Naive thymus-derived CD4-positive, alpha-beta T cell (primary cell): ENCODE measurements at regions of chr7 and their contacts with region 1.

Region 1: DNA sequence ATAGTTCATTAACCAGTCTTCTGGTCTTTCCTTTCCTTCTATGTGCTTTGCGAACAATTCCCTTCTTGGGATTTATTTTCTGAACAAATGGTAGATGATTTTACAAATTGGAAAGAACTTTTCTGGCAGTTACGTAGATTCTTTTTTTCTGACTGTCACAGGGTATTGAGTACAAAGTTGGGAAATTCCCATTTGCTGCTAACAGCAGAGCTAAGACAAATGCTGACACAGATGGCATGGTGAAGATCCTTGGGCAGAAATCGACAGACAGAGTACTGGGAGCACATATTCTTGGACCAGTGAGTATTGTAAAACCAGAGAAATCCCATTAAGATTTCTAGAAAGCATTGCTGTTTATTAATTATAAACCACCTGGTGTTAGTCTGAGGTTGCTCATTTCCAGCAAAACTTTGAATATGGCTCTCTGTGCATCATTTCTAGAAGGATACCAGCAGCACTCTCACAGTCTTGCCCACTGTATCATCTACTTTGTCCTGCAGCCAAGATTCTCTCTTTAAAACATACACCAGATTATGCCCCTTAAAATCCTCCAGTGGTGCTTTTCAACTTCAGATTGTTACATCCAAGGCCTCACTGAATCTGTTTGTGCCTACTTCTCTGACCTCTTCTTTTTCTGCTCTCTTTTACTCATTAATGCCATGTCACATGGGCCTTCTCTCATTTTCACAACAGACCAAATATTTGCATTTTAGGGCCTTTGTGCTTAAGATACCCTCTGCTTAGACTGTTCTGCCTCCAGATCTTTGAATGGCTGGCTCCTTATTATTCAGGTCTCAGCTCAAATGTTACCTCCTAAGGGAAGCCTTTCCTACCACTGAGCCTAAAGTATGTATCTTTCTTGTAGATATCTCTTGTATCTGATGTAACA is 27.0 kb downstream of the DLD start:
- DNase-seq: no peak
- ATAC-seq: no peak
- H3K4me3 ChIP-seq: no peak overlapping the region
- H3K4me3 Mint-ChIP-seq: no peak overlapping the region
- H3K27ac ChIP-seq: no peak overlapping the region
- H3K27ac Mint-ChIP-seq: peak overlapping the region in 1 of 9 donors; percentile 12
- H3K4me1 ChIP-seq: peaks cover 0 to 2% of the 10 kb centered on the region in 2 donors
- H3K4me1 Mint-ChIP-seq: peaks cover 12 to 46% (median 35%) of the 10 kb centered on the region in 7 donors
- H3K27me3 ChIP-seq: no peaks in the 10 kb centered on the region
- H3K27me3 Mint-ChIP-seq: no peaks in the 10 kb centered on the region

Region 2: DNA sequence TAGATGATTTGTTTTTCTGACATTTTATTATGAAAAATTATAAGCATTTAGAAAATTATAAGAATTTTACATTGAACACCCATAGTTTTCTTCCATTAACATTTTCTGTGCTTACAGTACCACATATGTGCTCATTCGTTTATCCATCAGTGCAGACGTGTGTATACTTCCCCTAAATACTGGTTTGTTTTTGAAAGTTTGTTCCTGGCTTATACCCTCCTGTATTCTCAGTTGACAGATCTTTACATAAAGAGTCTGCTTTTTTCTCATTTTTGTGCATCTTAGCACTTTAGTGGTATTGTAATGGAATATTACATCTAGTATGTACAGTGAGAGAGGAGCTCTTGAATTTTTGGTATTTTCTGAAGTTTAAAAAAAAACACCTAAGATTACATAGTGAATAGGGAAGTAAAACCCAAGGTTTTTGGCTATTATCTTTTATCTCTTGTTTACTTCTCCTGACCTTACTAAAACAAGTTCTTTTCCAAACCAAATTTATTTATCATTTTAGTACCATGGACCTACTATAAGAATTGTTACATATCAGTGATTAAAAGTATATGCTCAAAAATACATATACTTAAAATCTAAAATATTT is 18.9 kb before region 1 on chr7:
- CTCF ChIA-PET with region 1: no interaction called
- POLR2A ChIA-PET with region 1: no interaction called
- intact Hi-C with region 1: loop called in 1 of 2 experiments (anchors 2 kb)
- DNase-seq: no peak
- ATAC-seq: peak; percentile 44
- H3K4me3 ChIP-seq: no peak overlapping the region
- H3K4me3 Mint-ChIP-seq: peak overlapping the region in 6 of 10 donors; percentile 7 to 57 (median 43)
- H3K27ac ChIP-seq: no peak overlapping the region
- H3K27ac Mint-ChIP-seq: peak overlapping the region in 2 of 9 donors; percentile 9 to 65
- H3K4me1 ChIP-seq: peaks cover 0 to 8% of the 10 kb centered on the region in 2 donors
- H3K4me1 Mint-ChIP-seq: peaks cover 38 to 82% (median 62%) of the 10 kb centered on the region in 7 donors
- H3K27me3 ChIP-seq: no peaks in the 10 kb centered on the region
- H3K27me3 Mint-ChIP-seq: no peaks in the 10 kb centered on the region

Region 3: DNA sequence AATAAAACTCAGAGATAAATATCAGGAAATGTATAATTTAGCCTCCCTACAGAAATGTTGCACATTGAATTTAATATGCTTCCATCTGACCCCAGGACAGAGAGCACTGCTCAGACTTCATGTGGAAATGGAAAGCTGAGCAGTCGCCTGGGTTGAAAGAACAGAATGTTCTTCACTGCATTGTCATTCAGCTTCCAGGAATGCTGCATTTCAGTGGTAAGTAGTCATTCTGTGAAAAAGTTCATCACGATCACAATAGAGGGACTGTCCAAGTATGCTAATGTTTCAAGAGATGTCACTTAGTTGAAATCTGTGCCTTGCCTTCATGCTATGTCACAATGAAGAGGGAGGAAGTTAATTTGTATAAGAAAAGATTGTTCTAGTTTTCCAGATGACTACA is 390.9 kb after region 1 on chr7:
- CTCF ChIA-PET with region 1: no interaction called
- POLR2A ChIA-PET with region 1: no interaction called
- intact Hi-C with region 1: no loop called
- DNase-seq: no peak
- ATAC-seq: no peak
- H3K4me3 ChIP-seq: no peak overlapping the region
- H3K4me3 Mint-ChIP-seq: no peak overlapping the region
- H3K27ac ChIP-seq: no peak overlapping the region
- H3K27ac Mint-ChIP-seq: no peak overlapping the region
- H3K4me1 ChIP-seq: no peaks in the 10 kb centered on the region
- H3K4me1 Mint-ChIP-seq: peaks cover 0 to 3% (median 0%) of the 10 kb centered on the region in 7 donors
- H3K27me3 ChIP-seq: no peaks in the 10 kb centered on the region
- H3K27me3 Mint-ChIP-seq: peaks cover 0 to 7% (median 0%) of the 10 kb centered on the region in 5 donors

Region 4: GRCh38 chr7:108395426-108395825 is 477.4 kb after region 1 on chr7:
- CTCF ChIA-PET with region 1: no interaction called
- POLR2A ChIA-PET with region 1: no interaction called
- intact Hi-C with region 1: no loop called
- DNase-seq: no peak
- ATAC-seq: no peak
- H3K4me3 ChIP-seq: no peak overlapping the region
- H3K4me3 Mint-ChIP-seq: no peak overlapping the region
- H3K27ac ChIP-seq: no peak overlapping the region
- H3K27ac Mint-ChIP-seq: no peak overlapping the region
- H3K4me1 ChIP-seq: no peaks in the 10 kb centered on the region
- H3K4me1 Mint-ChIP-seq: no peaks in the 10 kb centered on the region
- H3K27me3 ChIP-seq: no peaks in the 10 kb centered on the region
- H3K27me3 Mint-ChIP-seq: peaks cover 9 to 16% (median 14%) of the 10 kb centered on the region in 5 donors